GM18951 (cell line): ENCODE measurements at regions of chr11 and their contacts with region 1.

Region 1: DNA sequence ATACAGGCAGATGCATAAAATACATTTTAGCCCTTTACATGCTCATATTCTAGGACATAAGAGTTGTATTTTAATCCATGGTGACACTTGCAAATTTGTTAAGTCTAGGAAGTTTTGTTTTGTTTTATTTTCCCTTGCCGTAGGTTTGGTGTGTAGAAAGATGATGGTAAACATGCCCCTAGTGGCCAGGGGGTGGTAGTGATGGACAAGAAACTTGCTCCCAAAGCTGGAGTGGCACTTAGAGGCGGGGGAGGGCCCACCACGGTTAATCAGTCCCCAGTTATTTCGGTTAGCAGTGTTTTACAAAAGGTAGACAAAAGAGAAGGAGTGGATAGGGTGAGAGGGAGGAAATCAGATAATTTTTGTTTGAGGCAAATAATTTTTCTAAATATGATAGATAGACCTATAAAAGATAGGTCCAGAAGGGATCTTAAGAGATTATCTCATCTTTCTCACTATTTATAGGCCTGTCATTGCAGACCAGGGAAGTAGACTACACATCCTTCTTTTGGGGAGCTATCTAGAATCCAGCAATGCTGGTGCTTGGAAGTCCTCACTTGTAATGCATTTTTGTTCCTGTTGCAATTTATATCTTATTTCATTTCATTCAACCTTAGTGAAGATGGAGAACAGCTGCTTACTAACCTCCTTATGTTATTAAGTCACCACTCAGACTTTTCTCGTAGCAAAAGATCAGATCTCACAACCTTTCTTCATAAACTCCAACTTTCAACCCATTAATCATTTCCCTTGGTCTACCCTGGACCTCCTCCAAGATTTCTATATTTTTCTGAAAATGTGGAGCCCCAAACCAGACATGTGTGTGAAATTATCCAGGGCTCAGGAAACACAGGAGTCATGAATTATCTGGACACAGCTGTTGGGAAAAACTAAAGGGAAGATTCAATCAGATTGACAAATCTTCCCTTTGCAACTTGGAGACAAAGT is 5.9 kb upstream of the BDNF start:
- POLR2A ChIP-seq: no peak

Region 2: DNA sequence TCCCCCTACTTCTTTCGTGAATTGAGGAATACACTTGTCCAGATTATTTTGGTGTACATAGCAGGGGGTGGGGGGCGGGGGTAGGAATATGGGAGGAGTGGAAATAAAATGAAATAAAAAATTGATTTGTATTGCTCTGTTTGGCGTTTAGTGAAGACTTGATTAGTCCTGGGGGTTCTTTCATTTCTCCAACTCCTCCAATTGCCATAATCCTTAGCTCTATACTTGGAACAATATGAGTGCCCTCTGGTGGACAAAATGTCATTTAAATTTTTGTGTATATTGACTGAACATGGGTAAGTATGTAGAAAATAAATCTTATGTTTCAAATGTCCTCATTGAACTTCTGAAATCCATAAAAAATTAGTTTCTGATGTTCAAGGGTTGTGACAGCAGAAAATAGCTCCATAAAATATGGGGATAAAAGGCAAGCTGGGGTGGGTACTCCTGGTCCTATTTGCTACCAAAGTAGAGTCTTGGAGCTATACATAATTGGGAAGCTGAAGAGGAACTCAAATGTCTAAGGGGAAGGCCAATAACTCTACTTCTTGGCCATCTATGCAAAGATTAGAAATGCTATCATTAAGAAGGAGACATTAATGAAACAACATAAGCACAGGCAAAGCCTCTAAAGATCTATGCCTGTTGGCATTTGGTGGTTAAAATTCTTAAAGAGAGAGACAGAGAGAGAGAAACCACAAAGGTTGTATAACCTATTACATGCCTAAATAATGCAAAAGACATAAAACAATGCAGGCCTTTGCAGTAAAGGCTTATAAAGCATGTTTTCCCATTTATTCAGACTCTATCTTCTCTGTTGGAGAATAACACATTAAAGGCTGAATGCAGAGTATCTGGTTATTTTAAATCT is 823.6 kb after region 1 on chr11:
- in situ Hi-C with region 1: loop called (anchors 10 kb)
- POLR2A ChIP-seq: no peak